ENCODE measurements at regions of chr2 and their contacts with region 1.

Region 1: DNA sequence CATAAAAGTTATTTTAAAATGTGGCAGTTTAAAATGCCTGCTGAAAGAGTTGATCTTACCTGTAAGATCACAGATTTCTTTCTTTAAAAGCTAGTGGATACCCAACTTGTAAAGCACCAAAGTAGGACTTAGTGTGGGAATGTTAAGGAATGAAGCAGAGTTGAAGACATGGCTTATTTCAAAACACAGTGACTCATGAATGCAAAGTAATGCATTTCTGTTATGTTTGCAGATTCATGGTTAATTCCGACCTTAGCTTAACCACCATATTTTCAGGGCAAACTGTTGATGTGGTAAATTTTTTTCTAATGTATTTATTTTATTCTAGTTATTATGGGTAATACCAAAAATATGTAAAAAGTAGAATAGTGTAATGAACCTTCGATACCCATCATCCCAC is 206.8 kb upstream of the FOSL2 start:
- DNase-seq: no peak

Region 2: GRCh38 chr2:28327947-28328922 is 142.3 kb after region 1 on chr2:
- intact Hi-C with region 1: loop called in 1 of 2 experiments (anchors 2 kb)
- DNase-seq: no peak